Activated naive CD4-positive, alpha-beta T cell treated with anti-CD3 and anti-CD28 coated beads for 36 hours (primary cell): ENCODE measurements at regions of chr16 and their contacts with region 1.

Region 1: DNA sequence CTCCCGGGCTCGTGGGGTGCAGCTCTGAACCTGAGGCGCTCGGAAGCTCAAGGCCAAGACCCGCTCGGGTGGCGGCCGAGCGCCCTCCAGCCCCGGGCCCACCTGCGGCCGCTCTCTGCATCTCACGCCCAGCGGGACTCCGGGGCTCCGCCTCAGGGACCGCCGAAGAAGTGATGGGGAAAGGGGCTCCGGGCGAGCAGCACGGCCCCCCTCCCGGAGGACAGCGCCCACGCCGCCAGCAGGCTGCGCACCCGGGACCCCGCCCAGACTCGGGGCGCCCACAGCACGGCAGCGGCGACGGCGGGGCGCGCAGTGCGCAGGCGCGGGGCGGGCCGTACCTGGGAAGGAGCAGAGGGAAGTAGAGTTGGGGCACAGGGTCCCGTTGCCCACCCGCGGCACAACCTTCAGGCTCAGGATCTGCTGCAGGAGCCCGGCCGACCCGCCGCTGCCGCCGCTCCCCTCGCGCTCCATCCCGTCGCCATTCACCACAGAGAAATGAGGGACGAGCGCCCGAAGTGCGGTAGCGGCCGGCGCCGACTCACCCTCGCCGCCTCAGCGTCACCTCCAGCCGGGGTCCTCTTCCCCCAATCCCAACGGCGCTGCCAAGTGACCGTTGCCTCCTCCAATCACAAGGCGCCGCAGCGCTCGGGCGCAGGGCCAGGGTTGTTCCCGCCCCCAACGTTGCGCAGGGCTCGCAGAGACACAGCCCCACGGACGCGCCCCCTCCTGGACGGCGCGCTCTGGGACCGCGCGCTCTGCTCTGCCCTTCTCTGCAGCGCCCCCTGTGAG is at the start of gene TMEM170A:
- DNase-seq: peak; percentile 99
- H3K4me3 Mint-ChIP-seq: peak within 1 kb of the TSS; percentile 87
- H3K27ac Mint-ChIP-seq: peak within 1 kb of the TSS; percentile 88
- H3K4me1 Mint-ChIP-seq: peaks cover 43% of the 10 kb centered on the region
- H3K27me3 Mint-ChIP-seq: no peaks in the 10 kb centered on the region
- total RNA-seq, gene TMEM170A: 18.8 to 19.0 TPM

Region 2: GRCh38 chr16:74296432-74297144 is 1167.7 kb before region 1 on chr16 and contains the start of gene PSMD7:
- CTCF ChIA-PET with region 1: no interaction called
- intact Hi-C with region 1: loop called (anchors 5 kb)
- DNase-seq: peak; percentile 93
- H3K4me3 Mint-ChIP-seq: peak within 1 kb of the TSS; percentile 92
- H3K27ac Mint-ChIP-seq: peak within 1 kb of the TSS; percentile 93
- H3K4me1 Mint-ChIP-seq: peaks cover 32% of the 10 kb centered on the region
- H3K27me3 Mint-ChIP-seq: no peaks in the 10 kb centered on the region
- total RNA-seq, gene PSMD7: 113 to 114 TPM

Region 3: GRCh38 chr16:75198135-75198600 is 266.2 kb before region 1 on chr16:
- CTCF ChIA-PET with region 1: interaction called, 4 read pairs
- intact Hi-C with region 1: loop called (anchors 1 kb)
- DNase-seq: no peak
- H3K4me3 Mint-ChIP-seq: no peak overlapping the region
- H3K27ac Mint-ChIP-seq: no peak overlapping the region
- H3K4me1 Mint-ChIP-seq: peaks cover 9% of the 10 kb centered on the region
- H3K27me3 Mint-ChIP-seq: peaks cover 13% of the 10 kb centered on the region

Region 4: DNA sequence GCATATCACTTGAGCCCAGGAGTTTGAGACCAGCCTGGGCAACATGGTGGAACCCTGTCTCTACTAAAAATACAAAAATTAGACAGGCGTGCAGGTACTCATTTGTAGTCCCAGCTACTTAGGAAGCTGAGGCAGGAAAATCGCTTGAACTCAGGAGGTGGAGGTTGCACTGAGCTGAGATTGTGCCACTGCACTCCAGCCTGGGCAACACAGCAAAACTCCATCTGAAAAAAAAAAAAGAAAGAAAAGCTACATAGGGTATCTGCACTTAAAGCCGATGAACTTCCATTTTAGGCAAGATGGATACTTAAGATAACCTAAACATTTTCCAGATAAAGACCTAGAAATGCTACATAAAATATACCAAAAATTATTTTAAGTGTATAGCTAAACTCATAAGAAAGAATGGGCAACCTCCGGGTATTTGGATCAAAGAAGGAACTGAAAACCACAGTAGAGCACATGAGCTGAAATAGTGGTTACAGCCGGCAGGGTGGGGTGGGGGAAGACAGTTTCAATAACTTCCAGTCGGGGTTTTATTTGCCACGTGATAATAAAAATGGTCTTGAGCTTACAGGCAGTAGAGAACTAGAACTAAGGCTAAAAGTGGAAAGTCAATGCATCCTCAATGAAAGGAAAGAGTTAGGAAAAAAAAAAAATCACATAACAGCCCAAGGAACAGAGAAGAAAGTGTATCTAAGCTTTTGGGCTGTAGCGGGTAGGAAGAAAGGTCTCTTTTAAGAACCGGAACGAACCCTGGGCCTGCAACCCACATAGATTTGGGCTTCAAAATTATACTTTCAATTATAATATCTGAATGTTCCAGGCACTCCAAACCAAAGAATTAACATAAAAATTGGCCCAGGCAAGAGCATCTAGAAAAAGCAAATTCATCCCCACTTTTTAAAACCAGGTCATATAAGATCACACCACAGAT is 84.1 kb before region 1 on chr16:
- CTCF ChIA-PET with region 1: interaction called, 4 read pairs
- intact Hi-C with region 1: loop called (anchors 2 kb)
- DNase-seq: peak; percentile 53
- H3K4me3 Mint-ChIP-seq: no peak overlapping the region
- H3K27ac Mint-ChIP-seq: no peak overlapping the region
- H3K4me1 Mint-ChIP-seq: peaks cover 51% of the 10 kb centered on the region
- H3K27me3 Mint-ChIP-seq: peaks cover 2% of the 10 kb centered on the region

Region 5: GRCh38 chr16:75519881-75520280 is 55.6 kb after region 1 on chr16:
- CTCF ChIA-PET with region 1: interaction called, 6 read pairs
- intact Hi-C with region 1: loop called (anchors 1 kb)
- DNase-seq: no peak
- H3K4me3 Mint-ChIP-seq: no peak overlapping the region
- H3K27ac Mint-ChIP-seq: no peak overlapping the region
- H3K4me1 Mint-ChIP-seq: peaks cover 7% of the 10 kb centered on the region
- H3K27me3 Mint-ChIP-seq: no peaks in the 10 kb centered on the region

Region 6: GRCh38 chr16:75622761-75623605 is 158.7 kb after region 1 on chr16 and contains the start of gene ADAT1:
- CTCF ChIA-PET with region 1: interaction called, 4 read pairs
- intact Hi-C with region 1: loop called (anchors 1 kb)
- DNase-seq: peak; percentile 99
- H3K4me3 Mint-ChIP-seq: peak within 1 kb of the TSS; percentile 95
- H3K27ac Mint-ChIP-seq: peak within 1 kb of the TSS; percentile 95
- H3K4me1 Mint-ChIP-seq: peaks cover 39% of the 10 kb centered on the region
- H3K27me3 Mint-ChIP-seq: no peaks in the 10 kb centered on the region
- total RNA-seq, gene ADAT1: 45.3 to 47.5 TPM